Activated CD4-positive, alpha-beta memory T cell treated with anti-CD3 and anti-CD28 coated beads for 36 hours (primary cell): ENCODE measurements at regions of chr22 and their contacts with region 1.

Region 1: DNA sequence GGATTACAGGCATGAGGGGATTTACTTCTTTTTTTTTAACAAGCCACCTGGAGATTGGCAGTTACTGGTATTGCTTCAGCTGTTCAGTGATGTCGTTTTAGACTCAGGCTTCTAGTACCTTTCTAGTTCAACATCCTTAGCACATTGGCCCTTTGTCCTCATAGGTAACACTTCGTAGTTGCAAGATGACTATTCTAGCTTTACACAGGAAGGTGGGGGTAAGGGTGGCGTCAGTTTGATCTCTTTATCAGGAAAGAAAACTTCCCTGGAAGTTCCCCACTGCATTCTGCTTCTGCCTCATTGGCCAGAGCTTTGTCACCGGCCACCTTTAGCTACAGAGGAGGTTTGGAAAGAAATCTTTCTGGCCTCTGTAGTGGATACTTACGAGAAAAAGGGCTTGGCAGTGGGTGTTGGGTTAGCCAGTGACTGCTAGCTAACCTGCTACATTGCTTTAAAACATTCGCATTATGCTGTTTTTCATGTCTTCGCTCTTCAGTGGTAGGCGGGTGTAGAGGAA is 40.7 kb downstream of the SFI1 start:
- DNase-seq: peak; percentile 80
- H3K4me3 Mint-ChIP-seq: peak overlapping the region; percentile 2
- H3K27ac Mint-ChIP-seq: peak overlapping the region; percentile 97
- H3K4me1 Mint-ChIP-seq: peaks cover 69% of the 10 kb centered on the region
- H3K27me3 Mint-ChIP-seq: no peaks in the 10 kb centered on the region

Region 2: DNA sequence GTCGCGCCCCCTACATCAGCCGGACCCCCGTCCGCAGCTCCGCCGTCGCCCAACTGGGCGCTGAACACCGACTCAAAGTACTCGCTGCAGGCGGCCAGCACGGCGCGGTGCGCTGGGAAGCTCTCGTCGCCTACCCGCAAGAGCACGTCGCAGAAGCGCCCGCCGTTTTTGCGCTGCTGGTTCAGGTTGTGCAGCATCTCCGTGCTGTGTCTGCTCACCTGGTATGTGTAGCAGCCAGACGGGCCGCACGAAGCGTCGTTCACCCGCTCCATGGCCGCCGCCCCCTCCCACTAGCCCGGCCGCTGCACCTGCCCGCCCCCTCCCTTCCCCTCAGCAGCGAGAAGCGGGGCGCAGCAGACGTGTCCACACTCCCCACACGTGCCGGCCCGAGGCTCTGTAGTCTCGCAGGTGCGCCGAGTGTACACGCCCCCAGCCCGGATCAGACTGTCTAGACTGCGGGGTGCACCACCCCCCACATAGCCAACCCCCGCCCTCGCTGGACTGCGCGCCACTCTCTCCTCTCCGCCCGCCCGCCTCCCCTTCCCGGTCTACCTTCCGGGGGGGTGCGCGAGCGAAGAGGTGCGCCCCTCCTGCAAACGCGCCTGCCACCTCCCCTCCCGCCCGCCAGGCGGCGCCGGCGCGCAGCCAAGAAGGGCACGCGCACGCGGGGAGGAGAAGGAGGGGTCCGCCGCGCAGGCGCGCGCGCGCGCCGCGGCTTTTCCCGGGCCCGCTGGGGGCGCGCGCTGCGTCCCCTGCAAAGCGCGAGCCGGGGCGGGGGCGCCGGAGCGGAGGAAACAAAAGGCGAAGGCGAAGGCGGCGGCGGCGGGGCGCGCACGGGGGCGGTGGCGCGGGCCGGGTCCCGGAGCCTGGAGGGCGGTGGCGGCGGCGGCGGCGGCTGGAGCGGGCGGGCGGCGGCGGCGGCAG is 191.5 kb before region 1 on chr22:
- CTCF ChIA-PET with region 1: no interaction called
- POLR2A ChIA-PET with region 1: no interaction called
- intact Hi-C with region 1: loop called (anchors 5 kb)
- DNase-seq: peak; percentile 91
- H3K4me3 Mint-ChIP-seq: peak overlapping the region; percentile 89
- H3K27ac Mint-ChIP-seq: peak overlapping the region; percentile 91
- H3K4me1 Mint-ChIP-seq: peaks cover 46% of the 10 kb centered on the region
- H3K27me3 Mint-ChIP-seq: no peaks in the 10 kb centered on the region

Region 3: DNA sequence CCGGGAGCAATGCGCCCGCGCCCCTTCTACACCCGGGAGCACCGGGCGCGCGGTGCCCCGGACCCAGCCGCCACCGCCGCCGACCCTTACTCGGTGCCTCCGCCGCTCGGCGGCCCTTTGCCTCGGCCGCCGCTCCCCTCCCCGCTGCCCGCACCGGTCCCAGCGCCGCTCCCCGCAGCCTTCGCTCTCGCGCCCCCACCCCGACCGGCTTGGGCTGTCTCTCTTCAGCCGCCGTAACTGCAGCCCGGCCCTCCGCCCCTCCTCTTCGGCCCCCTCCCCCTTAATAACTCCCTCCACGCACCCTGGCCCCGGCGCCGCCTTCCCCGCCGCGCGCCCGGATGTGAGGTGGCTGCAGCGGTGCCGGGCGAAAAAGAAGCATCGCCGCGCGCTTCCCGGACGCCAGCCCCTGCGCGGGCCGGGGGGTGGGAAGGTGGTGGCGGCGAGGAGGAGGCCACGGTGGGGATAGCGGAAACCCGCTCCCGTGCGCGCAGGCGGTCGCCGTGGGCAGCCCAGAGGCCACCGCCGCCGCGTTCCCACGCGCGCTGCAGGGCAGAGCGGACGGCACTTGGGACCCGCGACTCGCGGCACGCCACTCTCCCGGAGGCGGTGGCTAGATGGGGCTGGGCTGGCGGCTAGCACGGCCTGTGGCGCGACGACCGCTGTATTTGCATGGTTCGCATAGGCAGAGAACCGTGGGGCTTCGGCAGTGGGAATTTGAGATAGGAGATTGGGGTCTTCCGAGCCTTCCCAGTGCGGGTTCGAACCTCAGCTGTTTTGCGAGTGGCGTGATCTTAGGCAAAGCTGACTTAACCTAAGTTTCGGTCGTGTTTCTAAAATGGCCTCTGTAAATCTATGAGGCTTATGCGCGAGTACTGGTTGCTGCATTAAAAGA is 47.2 kb before region 1 on chr22 and contains the start of gene EIF4ENIF1:
- CTCF ChIA-PET with region 1: no interaction called
- POLR2A ChIA-PET with region 1: interaction called, 31 read pairs
- intact Hi-C with region 1: no loop called
- DNase-seq: peak; percentile 90
- H3K4me3 Mint-ChIP-seq: peak within 1 kb of the TSS; percentile 98
- H3K27ac Mint-ChIP-seq: peak within 1 kb of the TSS; percentile 99
- H3K4me1 Mint-ChIP-seq: peaks cover 54% of the 10 kb centered on the region
- H3K27me3 Mint-ChIP-seq: no peaks in the 10 kb centered on the region
- total RNA-seq, gene EIF4ENIF1: 39.7 to 43.2 TPM

Region 4: GRCh38 chr22:31496007-31496734 is 40.9 kb before region 1 on chr22 and contains the start of gene SFI1:
- CTCF ChIA-PET with region 1: no interaction called
- POLR2A ChIA-PET with region 1: interaction called, 31 read pairs
- intact Hi-C with region 1: loop called (anchors 1 kb)
- DNase-seq: peak; percentile 96
- H3K4me3 Mint-ChIP-seq: peak within 1 kb of the TSS; percentile 92
- H3K27ac Mint-ChIP-seq: peak within 1 kb of the TSS; percentile 94
- H3K4me1 Mint-ChIP-seq: peaks cover 50% of the 10 kb centered on the region
- H3K27me3 Mint-ChIP-seq: no peaks in the 10 kb centered on the region
- total RNA-seq, gene SFI1: 227 to 240 TPM

Region 5: DNA sequence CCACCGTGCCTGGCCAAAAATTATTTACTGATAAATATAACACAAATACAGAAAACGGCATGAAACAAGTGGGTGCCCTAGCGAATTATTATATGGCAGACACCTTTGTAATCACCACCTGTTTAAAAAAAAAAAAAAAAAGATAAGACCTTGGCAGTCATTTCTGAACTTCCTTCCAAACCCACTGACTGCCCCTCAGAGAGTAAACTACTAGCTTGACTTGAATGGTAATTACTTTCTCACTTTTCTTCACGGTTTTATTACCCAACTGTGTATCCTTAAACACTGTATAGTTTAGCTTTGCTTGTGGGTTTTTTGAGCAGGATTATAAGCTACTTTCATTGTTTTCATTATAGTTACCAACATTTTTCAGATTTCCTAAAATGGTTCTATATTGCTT is 17.0 kb before region 1 on chr22:
- CTCF ChIA-PET with region 1: interaction called, 3 read pairs
- POLR2A ChIA-PET with region 1: interaction called, 37 read pairs
- intact Hi-C with region 1: no loop called
- DNase-seq: no peak
- H3K4me3 Mint-ChIP-seq: no peak overlapping the region
- H3K27ac Mint-ChIP-seq: peak overlapping the region; percentile 34
- H3K4me1 Mint-ChIP-seq: peaks cover 60% of the 10 kb centered on the region
- H3K27me3 Mint-ChIP-seq: no peaks in the 10 kb centered on the region

Region 6: GRCh38 chr22:31526270-31526669 is 10.8 kb before region 1 on chr22:
- CTCF ChIA-PET with region 1: interaction called, 4 read pairs
- POLR2A ChIA-PET with region 1: interaction called, 37 read pairs
- intact Hi-C with region 1: loop called (anchors 1 kb)
- DNase-seq: peak; percentile 76
- H3K4me3 Mint-ChIP-seq: peak overlapping the region; percentile 45
- H3K27ac Mint-ChIP-seq: peak overlapping the region; percentile 96
- H3K4me1 Mint-ChIP-seq: peaks cover 64% of the 10 kb centered on the region
- H3K27me3 Mint-ChIP-seq: no peaks in the 10 kb centered on the region

Region 7: GRCh38 chr22:31585161-31585859 is 48.2 kb after region 1 on chr22:
- CTCF ChIA-PET with region 1: no interaction called
- POLR2A ChIA-PET with region 1: interaction called, 3 read pairs
- intact Hi-C with region 1: loop called (anchors 1 kb)
- DNase-seq: peak; percentile 49
- H3K4me3 Mint-ChIP-seq: no peak overlapping the region
- H3K27ac Mint-ChIP-seq: peak overlapping the region; percentile 6
- H3K4me1 Mint-ChIP-seq: peaks cover 55% of the 10 kb centered on the region
- H3K27me3 Mint-ChIP-seq: no peaks in the 10 kb centered on the region